ENCODE measurements at regions of chr5 and their contacts with region 1.

Region 1: GRCh38 chr5:95781101-95781583 is 41.4 kb downstream of the GLRX start:
- DNase-seq: peak; percentile 59 to 85 (median 77)
- H3K4me3 ChIP-seq: peak overlapping the region in 17 of 59 donors; percentile 3 to 43 (median 28)
- H3K27ac ChIP-seq: peak overlapping the region in 55 of 59 donors; percentile 1 to 83 (median 58)
- H3K27me3 ChIP-seq: no peaks in the 10 kb centered on the region
- CTCF ChIP-seq: peak; percentile 72 to 99 (median 92)

Region 2: DNA sequence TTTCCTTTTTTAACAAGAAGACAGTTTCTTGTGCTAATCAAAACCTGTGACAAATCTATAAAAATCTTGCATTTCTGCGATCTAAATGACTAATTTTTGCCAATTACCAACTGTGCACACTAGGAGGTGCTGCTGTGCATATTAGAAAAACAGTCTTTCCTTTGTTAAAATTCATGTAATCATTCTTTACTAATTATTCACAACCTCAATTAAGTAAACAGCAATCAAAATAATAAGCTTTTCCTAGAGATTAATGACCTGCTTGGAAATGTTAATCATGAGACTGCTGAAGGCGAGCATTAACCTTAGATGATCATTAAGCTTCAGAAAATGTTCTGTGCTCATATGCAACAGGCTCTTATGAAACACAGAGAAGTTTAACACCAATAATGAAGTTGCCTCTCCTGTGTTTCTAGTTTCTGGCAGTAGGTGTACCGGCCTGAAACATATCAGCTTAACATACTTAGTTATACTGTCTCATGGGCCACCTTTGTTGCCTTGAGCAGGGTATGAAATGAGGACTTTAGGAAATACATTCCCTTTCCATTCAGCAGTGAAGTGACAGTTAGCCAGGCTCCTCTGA is 116.8 kb before region 1 on chr5:
- intact Hi-C with region 1: loop called in 1 of 2 experiments (anchors 5 kb)
- DNase-seq: peak in 1 of 10 donors; percentile 18
- H3K4me3 ChIP-seq: peak overlapping the region in 9 of 59 donors; percentile 1 to 26 (median 5)
- H3K27ac ChIP-seq: peak overlapping the region in 16 of 59 donors; percentile 1 to 58 (median 25)
- H3K27me3 ChIP-seq: no peaks in the 10 kb centered on the region
- CTCF ChIP-seq: peak; percentile 56 to 95 (median 84)

Region 3: GRCh38 chr5:95730730-95731570 is 50.2 kb before region 1 on chr5 and contains the start of gene RHOBTB3:
- intact Hi-C with region 1: loop called in 1 of 2 experiments (anchors 2 kb)
- DNase-seq: peak; percentile 69 to 91 (median 88)
- H3K4me3 ChIP-seq: peak within 1 kb of the TSS; percentile 58 to 94 (median 85)
- H3K27ac ChIP-seq: peak within 1 kb of the TSS; percentile 79 to 98 (median 95)
- H3K27me3 ChIP-seq: no peaks in the 10 kb centered on the region
- CTCF ChIP-seq: peak in 23 of 56 donors; percentile 2 to 38 (median 16)
- total RNA-seq, gene RHOBTB3: 78.4 to 315 (median 137) TPM

Region 4: GRCh38 chr5:95743232-95743631 is 37.9 kb before region 1 on chr5:
- intact Hi-C with region 1: no loop called
- DNase-seq: no peak
- H3K4me3 ChIP-seq: no peak overlapping the region
- H3K27ac ChIP-seq: no peak overlapping the region
- H3K27me3 ChIP-seq: no peaks in the 10 kb centered on the region
- CTCF ChIP-seq: no peak

Region 5: GRCh38 chr5:95846554-95847260 is 65.6 kb after region 1 on chr5:
- intact Hi-C with region 1: loop called (anchors 1 to 5 kb)
- DNase-seq: peak in 8 of 10 donors; percentile 61 to 85 (median 78)
- H3K4me3 ChIP-seq: no peak overlapping the region
- H3K27ac ChIP-seq: peak overlapping the region in 29 of 59 donors; percentile 2 to 87 (median 33)
- H3K27me3 ChIP-seq: no peaks in the 10 kb centered on the region
- CTCF ChIP-seq: peak; percentile 95 to 100 (median 98)

Region 6: GRCh38 chr5:96331210-96331609 is 550.1 kb after region 1 on chr5:
- intact Hi-C with region 1: loop called in 1 of 2 experiments (anchors 5 kb)
- DNase-seq: no peak
- H3K4me3 ChIP-seq: no peak overlapping the region
- H3K27ac ChIP-seq: no peak overlapping the region
- H3K27me3 ChIP-seq: no peaks in the 10 kb centered on the region
- CTCF ChIP-seq: no peak

Region 7: DNA sequence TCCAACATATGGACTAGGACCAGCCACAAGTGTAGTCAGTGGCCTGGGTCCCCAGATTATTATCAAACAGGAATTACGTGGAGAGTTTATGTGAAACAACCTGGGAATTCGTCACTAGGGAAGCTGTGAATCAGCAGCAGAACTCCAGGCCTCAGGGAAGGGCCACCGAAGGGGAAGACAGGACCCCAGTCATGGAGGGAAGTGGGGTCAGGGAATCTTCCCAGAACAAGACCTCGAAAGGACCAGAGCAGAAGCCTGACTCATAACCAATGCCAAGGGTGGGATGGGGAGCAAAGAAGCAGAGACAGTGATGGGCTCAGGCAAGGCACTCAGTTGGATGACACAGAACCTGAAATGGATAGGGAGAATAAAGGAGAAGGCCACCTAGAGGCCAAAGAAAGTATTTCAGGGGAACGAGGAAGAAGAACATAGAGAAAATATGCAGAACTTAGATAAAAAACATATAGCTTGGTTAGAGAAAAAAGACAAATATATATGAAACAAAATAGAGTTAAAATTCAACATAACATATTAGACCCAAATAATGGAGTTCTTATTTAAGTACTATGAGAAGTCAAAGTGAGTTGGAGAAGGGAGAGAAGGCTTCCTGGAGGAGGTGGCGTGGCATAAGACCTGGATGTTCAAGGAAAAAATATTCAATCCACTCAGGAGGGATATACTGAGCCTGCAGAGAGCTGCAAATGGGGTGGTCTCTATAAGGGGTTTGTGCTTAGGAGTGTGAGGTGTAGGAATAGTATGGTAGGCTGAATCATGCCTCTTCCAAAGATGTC is 814.4 kb after region 1 on chr5:
- intact Hi-C with region 1: loop called in 1 of 2 experiments (anchors 5 kb)
- DNase-seq: no peak
- H3K4me3 ChIP-seq: no peak overlapping the region
- H3K27ac ChIP-seq: no peak overlapping the region
- H3K27me3 ChIP-seq: no peaks in the 10 kb centered on the region
- CTCF ChIP-seq: peak in 23 of 56 donors; percentile 6 to 41 (median 21)

Measured in dorsolateral prefrontal cortex (tissue), 120 donors.